B cell (primary cell): ENCODE measurements at regions of chr17 and their contacts with region 1.

Region 1: DNA sequence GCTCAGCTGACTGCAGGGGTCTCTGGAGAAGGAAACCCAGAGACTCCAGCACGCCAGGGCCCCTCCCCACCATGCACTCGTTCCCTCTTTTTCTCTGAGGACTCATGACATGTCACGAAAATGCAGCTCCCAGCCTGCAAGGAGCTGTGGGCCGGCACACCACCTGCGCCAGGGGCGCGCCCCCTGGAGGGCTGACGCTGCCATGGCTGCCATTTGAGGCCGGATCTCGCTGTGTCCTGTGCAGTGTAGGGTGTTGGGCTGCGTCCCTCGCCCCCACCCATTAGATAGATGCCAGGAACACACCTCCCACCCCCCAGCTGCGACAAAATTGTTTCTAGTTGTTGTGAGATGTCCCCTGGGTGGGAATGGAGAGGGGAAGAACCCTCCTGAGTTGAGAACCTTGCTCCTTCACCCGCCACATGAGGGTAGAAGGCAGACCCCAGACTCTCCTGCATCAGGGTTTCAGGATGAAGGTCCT is 8.2 kb downstream of the SYNGR2 start:
- DNase-seq: peak; percentile 87
- ATAC-seq: peak; percentile 59
- H3K4me3 ChIP-seq: no peak overlapping the region
- H3K4me3 Mint-ChIP-seq: peak overlapping the region; percentile 44
- H3K27ac ChIP-seq: no peak overlapping the region
- H3K27ac Mint-ChIP-seq: peak overlapping the region; percentile 89
- H3K4me1 ChIP-seq: peaks cover 66 to 67% of the 10 kb centered on the region in 2 donors
- H3K4me1 Mint-ChIP-seq: peaks cover 78% of the 10 kb centered on the region
- H3K27me3 ChIP-seq: no peaks in the 10 kb centered on the region
- H3K27me3 Mint-ChIP-seq: no peaks in the 10 kb centered on the region
- CTCF ChIP-seq: peak; percentile 93

Region 2: GRCh38 chr17:78128551-78129350 is 47.8 kb before region 1 on chr17 and contains the start of gene TMC6:
- CTCF ChIA-PET with region 1: interaction called, 357 read pairs
- POLR2A ChIA-PET with region 1: interaction called, 432 read pairs
- intact Hi-C with region 1: loop called (anchors 1 kb)
- DNase-seq: peak; percentile 88
- ATAC-seq: peak; percentile 21
- H3K4me3 ChIP-seq: peak within 1 kb of the TSS; percentile 38 to 97 (median 89)
- H3K4me3 Mint-ChIP-seq: peak within 1 kb of the TSS; percentile 96
- H3K27ac ChIP-seq: peak within 1 kb of the TSS; percentile 88 to 92
- H3K27ac Mint-ChIP-seq: peak within 1 kb of the TSS; percentile 99
- H3K4me1 ChIP-seq: peaks cover 68 to 80% of the 10 kb centered on the region in 2 donors
- H3K4me1 Mint-ChIP-seq: peaks cover 73% of the 10 kb centered on the region
- H3K27me3 ChIP-seq: no peaks in the 10 kb centered on the region
- H3K27me3 Mint-ChIP-seq: no peaks in the 10 kb centered on the region
- CTCF ChIP-seq: no peak
- total RNA-seq, gene TMC6: 891 and 910 TPM in 2 replicates

Region 3: DNA sequence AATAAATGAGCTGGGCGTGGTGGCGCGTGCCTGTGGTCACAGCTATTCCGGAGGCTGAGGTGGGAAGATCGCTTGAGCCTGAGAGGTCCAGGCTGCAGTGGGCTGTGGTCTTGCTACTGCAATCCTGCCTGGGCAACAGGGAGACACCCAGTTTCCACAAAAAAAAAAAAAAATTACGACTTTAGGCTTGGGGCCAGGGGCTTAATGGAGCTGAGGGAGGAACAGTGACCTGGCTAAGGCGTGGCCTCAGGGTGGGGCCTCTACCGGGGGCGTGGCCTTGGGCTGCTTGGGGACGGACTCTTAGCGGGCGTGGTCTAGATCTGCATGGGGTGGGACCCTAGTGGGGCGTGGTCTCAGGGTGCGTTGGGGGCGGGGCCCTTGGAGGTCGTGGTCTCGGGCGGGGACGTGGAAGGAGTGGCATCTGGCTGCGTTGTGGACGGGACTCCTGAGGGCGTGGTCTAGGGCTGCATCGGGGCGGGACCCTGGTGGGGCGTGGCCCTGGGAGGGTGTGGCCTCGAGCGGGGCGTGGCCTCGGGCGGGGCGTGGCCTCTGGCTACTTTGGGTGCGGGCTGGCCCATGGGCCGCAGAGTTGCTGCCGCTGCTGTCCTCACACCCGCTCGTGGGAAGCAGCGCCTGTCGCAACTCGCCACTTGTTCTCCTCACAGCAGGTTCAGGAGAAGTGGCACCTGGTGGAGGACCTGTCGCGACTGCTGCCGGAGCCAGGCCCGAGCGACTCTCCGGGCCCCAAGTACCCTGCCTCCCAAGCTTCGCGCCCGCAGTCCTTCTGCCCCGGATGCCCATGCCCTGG is 36.2 kb before region 1 on chr17:
- CTCF ChIA-PET with region 1: interaction called, 357 read pairs
- POLR2A ChIA-PET with region 1: interaction called, 432 read pairs
- intact Hi-C with region 1: loop called (anchors 1 kb)
- DNase-seq: peak; percentile 96
- ATAC-seq: peak; percentile 88
- H3K4me3 ChIP-seq: no peak overlapping the region
- H3K4me3 Mint-ChIP-seq: peak overlapping the region; percentile 46
- H3K27ac ChIP-seq: peak overlapping the region; percentile 43 to 51
- H3K27ac Mint-ChIP-seq: peak overlapping the region; percentile 73
- H3K4me1 ChIP-seq: peaks cover 71 to 94% of the 10 kb centered on the region in 2 donors
- H3K4me1 Mint-ChIP-seq: peaks cover 82% of the 10 kb centered on the region
- H3K27me3 ChIP-seq: no peaks in the 10 kb centered on the region
- H3K27me3 Mint-ChIP-seq: no peaks in the 10 kb centered on the region
- CTCF ChIP-seq: no peak

Region 4: GRCh38 chr17:78154903-78155811 is 21.4 kb before region 1 on chr17:
- CTCF ChIA-PET with region 1: interaction called, 15 read pairs
- POLR2A ChIA-PET with region 1: interaction called, 13 read pairs
- intact Hi-C with region 1: loop called (anchors 1 kb)
- DNase-seq: peak; percentile 92
- ATAC-seq: peak; percentile 81
- H3K4me3 ChIP-seq: peak overlapping the region in 2 of 5 experiments; percentile 1 to 11
- H3K4me3 Mint-ChIP-seq: peak overlapping the region; percentile 69
- H3K27ac ChIP-seq: peak overlapping the region; percentile 92 to 98
- H3K27ac Mint-ChIP-seq: peak overlapping the region; percentile 97
- H3K4me1 ChIP-seq: peaks cover 58 to 87% of the 10 kb centered on the region in 2 donors
- H3K4me1 Mint-ChIP-seq: peaks cover 65% of the 10 kb centered on the region
- H3K27me3 ChIP-seq: no peaks in the 10 kb centered on the region
- H3K27me3 Mint-ChIP-seq: no peaks in the 10 kb centered on the region
- CTCF ChIP-seq: no peak

Region 5: GRCh38 chr17:78241277-78242023 is 64.9 kb after region 1 on chr17:
- CTCF ChIA-PET with region 1: interaction called, 10 read pairs
- POLR2A ChIA-PET with region 1: interaction called, 5 read pairs
- intact Hi-C with region 1: no loop called
- DNase-seq: no peak
- ATAC-seq: no peak
- H3K4me3 ChIP-seq: no peak overlapping the region
- H3K4me3 Mint-ChIP-seq: no peak overlapping the region
- H3K27ac ChIP-seq: peak overlapping the region in 1 of 2 donors; percentile 79
- H3K27ac Mint-ChIP-seq: peak overlapping the region; percentile 70
- H3K4me1 ChIP-seq: peaks cover 26 to 34% of the 10 kb centered on the region in 2 donors
- H3K4me1 Mint-ChIP-seq: peaks cover 45% of the 10 kb centered on the region
- H3K27me3 ChIP-seq: peaks cover 0 to 2% (median 0%) of the 10 kb centered on the region in 4 experiments
- H3K27me3 Mint-ChIP-seq: no peaks in the 10 kb centered on the region
- CTCF ChIP-seq: no peak